ENCODE measurements at regions of chr12 and their contacts with region 1.

Region 1: DNA sequence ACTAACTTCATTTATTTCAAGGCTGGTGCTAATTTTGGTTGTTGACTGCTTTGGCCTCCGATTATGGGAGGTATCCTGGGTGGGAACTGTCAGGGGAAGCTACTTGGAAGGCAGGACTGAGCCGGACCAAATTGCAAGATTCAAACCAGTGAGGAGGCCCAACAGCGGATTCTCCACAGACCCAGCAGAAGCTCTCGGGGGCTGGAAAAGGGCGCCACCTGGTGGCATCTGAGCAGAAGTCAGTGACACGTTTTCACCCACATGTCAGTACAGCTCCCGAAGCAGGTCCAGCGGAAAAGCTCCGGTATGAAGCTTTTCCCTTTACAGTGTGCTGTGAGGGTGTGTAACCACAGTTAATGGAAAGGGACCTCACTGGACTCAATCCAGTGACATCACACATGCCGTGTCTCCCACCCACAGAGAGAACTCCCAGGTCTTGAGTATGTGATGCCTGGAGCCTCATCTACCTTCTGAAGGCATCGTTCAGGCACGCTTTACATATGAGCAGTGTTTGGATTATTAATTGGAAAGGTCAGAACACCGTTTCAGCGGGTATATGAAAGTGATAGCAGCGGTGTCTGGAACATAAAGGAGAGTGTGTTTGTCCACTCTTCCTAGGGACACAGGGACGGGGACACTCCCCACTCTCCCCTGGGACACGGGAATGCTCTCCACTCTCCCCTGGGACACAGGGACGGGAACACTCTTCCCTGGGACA is 3.6 kb upstream of the P2RX2 start:
- DNase-seq: peak; percentile 81
- H3K4me3 ChIP-seq: no peak overlapping the region
- H3K27ac ChIP-seq: no peak overlapping the region
- H3K4me1 ChIP-seq: no peaks in the 10 kb centered on the region
- H3K27me3 ChIP-seq: peaks cover 28 to 38% of the 10 kb centered on the region in 2 experiments
- CTCF ChIP-seq: peak; percentile 89 to 93
- POLR2A ChIP-seq: no peak

Region 2: GRCh38 chr12:132414634-132415326 is 200.2 kb before region 1 on chr12:
- CTCF ChIA-PET with region 1: interaction called, 82 read pairs
- POLR2A ChIA-PET with region 1: no interaction called
- dilution Hi-C with region 1: no loop called
- intact Hi-C with region 1: loop called (anchors 1 kb)
- DNase-seq: peak; percentile 51
- H3K4me3 ChIP-seq: no peak overlapping the region
- H3K27ac ChIP-seq: no peak overlapping the region
- H3K4me1 ChIP-seq: no peaks in the 10 kb centered on the region
- H3K27me3 ChIP-seq: no peaks in the 10 kb centered on the region
- CTCF ChIP-seq: peak; percentile 87 to 97
- POLR2A ChIP-seq: no peak

Region 3: GRCh38 chr12:132560614-132561426 is 54.2 kb before region 1 on chr12:
- CTCF ChIA-PET with region 1: interaction called, 16 read pairs
- POLR2A ChIA-PET with region 1: no interaction called
- dilution Hi-C with region 1: no loop called
- intact Hi-C with region 1: loop called (anchors 1 kb)
- DNase-seq: peak; percentile 63
- H3K4me3 ChIP-seq: peak overlapping the region; percentile 79 to 91 (median 81)
- H3K27ac ChIP-seq: peak overlapping the region; percentile 41
- H3K4me1 ChIP-seq: peaks cover 5% of the 10 kb centered on the region
- H3K27me3 ChIP-seq: no peaks in the 10 kb centered on the region
- CTCF ChIP-seq: peak; percentile 86 to 96
- POLR2A ChIP-seq: peak; percentile 42

Region 4: DNA sequence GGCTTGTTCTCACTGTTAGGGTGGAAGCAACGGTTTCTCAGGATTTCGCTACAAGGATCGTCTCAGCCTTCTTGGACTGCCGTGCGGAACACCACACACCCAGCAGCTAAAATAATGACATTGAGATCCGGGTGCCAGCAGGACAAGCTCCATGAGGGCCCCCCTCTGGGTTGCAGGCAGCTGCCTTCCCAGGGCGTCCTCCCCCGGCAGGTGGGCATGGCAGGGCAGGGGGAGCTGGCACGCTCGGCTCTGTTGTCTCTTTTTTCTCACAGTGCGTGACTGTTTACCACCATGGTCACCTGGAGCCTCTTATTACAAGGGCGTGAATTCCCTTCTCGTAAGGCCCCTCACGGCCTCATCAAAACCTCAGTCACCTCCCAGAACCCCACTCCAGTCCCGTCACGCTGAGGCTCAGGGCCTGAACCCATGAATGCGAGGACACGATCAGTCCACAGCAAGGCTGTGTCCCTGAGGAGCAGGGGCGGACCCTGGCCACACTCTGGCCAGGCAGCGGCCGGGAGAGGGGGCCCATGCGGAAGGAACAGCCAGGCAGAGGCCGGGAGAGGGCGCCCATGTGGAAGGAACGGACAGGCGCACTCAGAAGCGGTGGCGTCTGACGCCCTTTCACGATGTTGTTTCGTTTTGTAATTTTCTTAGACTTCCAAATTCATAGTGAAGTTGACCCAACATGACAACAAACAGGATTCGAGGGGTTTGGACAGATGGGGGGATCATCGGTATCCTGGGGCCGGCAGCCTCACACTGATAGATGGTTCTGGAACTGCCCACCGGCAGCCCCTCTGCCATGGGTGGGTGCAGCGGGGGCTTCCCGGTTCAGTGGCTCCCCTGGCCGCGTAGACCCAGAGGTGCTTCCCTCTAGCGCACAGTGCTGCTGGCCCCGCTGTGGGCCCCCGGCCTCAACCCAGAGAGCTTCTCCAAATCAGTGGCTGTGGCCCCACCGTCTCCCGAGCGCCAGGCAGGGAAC is 14.7 kb before region 1 on chr12:
- CTCF ChIA-PET with region 1: interaction called, 102 read pairs
- POLR2A ChIA-PET with region 1: no interaction called
- dilution Hi-C with region 1: no loop called
- intact Hi-C with region 1: loop called (anchors 1 kb)
- DNase-seq: peak; percentile 67
- H3K4me3 ChIP-seq: peak overlapping the region in 2 of 3 experiments; percentile 26 to 51
- H3K27ac ChIP-seq: no peak overlapping the region
- H3K4me1 ChIP-seq: peaks cover 24% of the 10 kb centered on the region
- H3K27me3 ChIP-seq: peaks cover 3 to 30% of the 10 kb centered on the region in 2 experiments
- CTCF ChIP-seq: peak; percentile 71 to 87
- POLR2A ChIP-seq: no peak

Region 5: DNA sequence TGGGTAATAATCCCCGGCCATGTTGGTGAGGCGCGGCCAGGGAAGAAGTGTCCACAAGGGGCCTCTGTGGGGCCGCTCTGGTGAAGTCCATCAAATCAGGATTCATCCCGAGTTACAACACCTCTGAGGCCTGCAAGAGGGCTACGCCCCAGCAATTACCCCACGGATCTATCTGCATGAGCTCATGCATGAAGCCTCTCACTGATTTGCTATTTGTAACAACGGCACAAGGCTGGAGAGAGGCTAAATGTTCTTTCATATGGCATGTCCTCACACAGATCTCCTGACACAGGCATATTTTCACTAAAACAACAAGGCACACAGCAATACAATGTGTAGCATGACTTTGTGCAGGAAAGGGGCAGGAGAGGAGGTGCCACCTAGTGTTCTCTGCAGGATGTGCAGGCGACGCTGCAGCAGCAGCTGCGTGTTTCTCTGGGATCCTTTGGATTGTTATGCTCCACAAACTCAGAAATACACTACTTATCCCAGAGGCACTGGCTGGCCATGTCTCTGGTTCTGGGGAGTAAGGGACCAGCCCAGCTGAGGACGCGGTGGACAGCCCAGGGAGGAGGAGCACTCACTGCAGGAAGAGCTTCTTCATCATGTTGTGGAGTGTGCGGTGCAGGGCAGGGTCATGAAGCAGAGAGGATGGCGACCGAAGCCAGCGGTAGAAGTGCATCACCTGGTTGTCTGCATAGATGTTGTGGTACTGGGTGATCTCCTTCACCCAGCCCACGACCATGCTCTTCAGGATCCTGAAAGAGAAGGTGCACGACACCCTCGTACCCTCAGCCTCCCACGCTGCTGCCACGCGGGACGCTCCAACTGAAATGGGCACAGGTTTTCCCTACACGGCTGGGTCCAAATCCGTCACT is 23.8 kb after region 1 on chr12:
- CTCF ChIA-PET with region 1: interaction called, 12 read pairs
- POLR2A ChIA-PET with region 1: no interaction called
- dilution Hi-C with region 1: no loop called
- intact Hi-C with region 1: no loop called
- DNase-seq: peak; percentile 59
- H3K4me3 ChIP-seq: no peak overlapping the region
- H3K27ac ChIP-seq: no peak overlapping the region
- H3K4me1 ChIP-seq: no peaks in the 10 kb centered on the region
- H3K27me3 ChIP-seq: no peaks in the 10 kb centered on the region
- CTCF ChIP-seq: peak; percentile 78 to 83
- POLR2A ChIP-seq: no peak